CD8-positive, alpha-beta T cell (primary cell): ENCODE measurements at regions of chr3 and their contacts with region 1.

Region 1: GRCh38 chr3:28210968-28211713 is 30.3 kb upstream of the CMC1 start:
- DNase-seq: peak in 2 of 9 experiments; percentile 36 to 56
- ATAC-seq: peak; percentile 75
- H3K4me3 ChIP-seq: no peak overlapping the region
- H3K4me3 Mint-ChIP-seq: peak overlapping the region; percentile 1
- H3K27ac ChIP-seq: peak overlapping the region in 1 of 2 experiments; percentile 51
- H3K27ac Mint-ChIP-seq: peak overlapping the region; percentile 83
- H3K4me1 ChIP-seq: peaks cover 20% of the 10 kb centered on the region
- H3K4me1 Mint-ChIP-seq: peaks cover 42% of the 10 kb centered on the region
- H3K27me3 ChIP-seq: no peaks in the 10 kb centered on the region
- H3K27me3 Mint-ChIP-seq: no peaks in the 10 kb centered on the region
- CTCF ChIP-seq: no peak

Region 2: DNA sequence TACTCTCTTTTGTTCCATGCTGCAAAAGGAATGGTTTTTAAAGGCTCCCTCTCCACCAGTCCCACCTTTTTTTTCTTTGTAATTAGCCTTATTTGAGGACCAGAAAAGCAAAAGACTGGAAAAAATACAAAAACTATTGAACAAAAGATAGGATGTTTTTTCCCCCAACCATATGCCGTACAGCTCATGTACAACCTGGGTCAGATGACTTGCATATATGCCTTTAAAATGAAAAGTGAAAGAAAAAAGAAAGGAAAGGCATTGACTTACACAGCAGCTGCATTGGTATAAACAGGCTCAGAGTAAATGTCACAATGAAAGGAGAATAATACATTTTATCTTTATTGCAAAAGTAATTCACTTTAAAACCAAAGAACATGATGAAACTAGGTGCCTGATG is 39.2 kb before region 1 on chr3:
- CTCF ChIA-PET with region 1: interaction called, 4 read pairs
- POLR2A ChIA-PET with region 1: no interaction called
- intact Hi-C with region 1: loop called in 1 of 2 experiments (anchors 5 kb)
- DNase-seq: peak in 2 of 9 experiments; percentile 32 to 57
- ATAC-seq: peak; percentile 71
- H3K4me3 ChIP-seq: peak overlapping the region in 1 of 2 experiments; percentile 38
- H3K4me3 Mint-ChIP-seq: peak overlapping the region; percentile 57
- H3K27ac ChIP-seq: peak overlapping the region; percentile 17 to 29
- H3K27ac Mint-ChIP-seq: peak overlapping the region; percentile 79
- H3K4me1 ChIP-seq: peaks cover 15% of the 10 kb centered on the region
- H3K4me1 Mint-ChIP-seq: peaks cover 17% of the 10 kb centered on the region
- H3K27me3 ChIP-seq: no peaks in the 10 kb centered on the region
- H3K27me3 Mint-ChIP-seq: no peaks in the 10 kb centered on the region
- CTCF ChIP-seq: no peak

Region 3: DNA sequence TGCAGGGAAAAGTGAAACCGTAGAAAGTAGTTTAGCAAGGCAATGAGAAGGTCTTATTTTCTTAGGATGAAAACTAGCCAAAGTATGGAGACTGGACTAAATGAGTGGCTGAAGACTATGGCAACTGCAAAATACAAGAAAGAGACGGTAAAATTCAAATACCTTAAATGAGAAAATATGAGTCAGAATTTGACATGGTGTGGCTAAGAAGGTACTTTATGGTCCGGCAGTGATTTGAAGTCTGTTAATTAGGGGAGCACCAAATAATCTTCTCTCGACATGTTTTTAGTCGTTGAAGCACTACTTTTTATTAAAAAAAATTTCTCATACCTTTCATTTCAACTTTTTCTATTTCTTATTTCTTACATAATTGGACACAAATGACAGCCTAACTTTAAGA is 17.5 kb after region 1 on chr3:
- CTCF ChIA-PET with region 1: no interaction called
- POLR2A ChIA-PET with region 1: interaction called, 5 read pairs
- intact Hi-C with region 1: loop called in 1 of 2 experiments (anchors 2 kb)
- DNase-seq: no peak
- ATAC-seq: no peak
- H3K4me3 ChIP-seq: no peak overlapping the region
- H3K4me3 Mint-ChIP-seq: no peak overlapping the region
- H3K27ac ChIP-seq: no peak overlapping the region
- H3K27ac Mint-ChIP-seq: no peak overlapping the region
- H3K4me1 ChIP-seq: no peaks in the 10 kb centered on the region
- H3K4me1 Mint-ChIP-seq: peaks cover 15% of the 10 kb centered on the region
- H3K27me3 ChIP-seq: no peaks in the 10 kb centered on the region
- H3K27me3 Mint-ChIP-seq: no peaks in the 10 kb centered on the region
- CTCF ChIP-seq: no peak

Region 4: GRCh38 chr3:28241221-28242160 is 30.4 kb after region 1 on chr3 and contains the start of gene CMC1:
- CTCF ChIA-PET with region 1: no interaction called
- POLR2A ChIA-PET with region 1: no interaction called
- intact Hi-C with region 1: loop called in 1 of 2 experiments (anchors 1 kb)
- DNase-seq: peak; percentile 68 to 94 (median 90)
- ATAC-seq: peak; percentile 90
- H3K4me3 ChIP-seq: peak within 1 kb of the TSS; percentile 76 to 89
- H3K4me3 Mint-ChIP-seq: peak within 1 kb of the TSS; percentile 95
- H3K27ac ChIP-seq: peak within 1 kb of the TSS; percentile 53 to 77
- H3K27ac Mint-ChIP-seq: peak within 1 kb of the TSS; percentile 92
- H3K4me1 ChIP-seq: peaks cover 29% of the 10 kb centered on the region
- H3K4me1 Mint-ChIP-seq: peaks cover 50% of the 10 kb centered on the region
- H3K27me3 ChIP-seq: no peaks in the 10 kb centered on the region
- H3K27me3 Mint-ChIP-seq: no peaks in the 10 kb centered on the region
- CTCF ChIP-seq: no peak
- total RNA-seq, gene CMC1: 28.0 to 31.0 TPM